Colonic mucosa (tissue), 4 donors: ENCODE measurements at regions of chr21 and their contacts with region 1.

Region 1: DNA sequence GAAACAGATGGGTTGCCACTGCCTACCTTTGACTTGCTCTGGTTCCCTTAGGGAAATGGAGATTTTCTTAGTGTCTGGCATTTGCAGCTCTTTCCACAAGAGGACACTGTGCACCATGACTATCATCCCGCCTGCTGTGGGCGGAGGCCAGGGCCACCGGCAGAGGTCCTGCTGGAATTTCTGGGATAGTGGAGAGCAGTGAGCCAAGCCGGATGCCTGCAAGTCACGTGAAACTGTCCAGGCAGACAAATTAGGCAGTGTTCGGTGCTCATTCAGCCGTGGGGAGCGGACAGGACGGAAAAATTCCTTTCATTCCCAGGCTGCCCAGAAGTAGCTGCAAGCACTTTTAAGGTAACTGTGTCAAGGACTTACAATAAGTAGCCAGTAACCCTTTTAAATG is 43.4 kb downstream of the IGSF5 start:
- DNase-seq: peak; percentile 75
- H3K4me3 ChIP-seq: no peak overlapping the region
- H3K27ac ChIP-seq: no peak overlapping the region
- H3K4me1 ChIP-seq: no peaks in the 10 kb centered on the region
- H3K27me3 ChIP-seq: no peaks in the 10 kb centered on the region
- CTCF ChIP-seq: peak; percentile 69

Region 2: DNA sequence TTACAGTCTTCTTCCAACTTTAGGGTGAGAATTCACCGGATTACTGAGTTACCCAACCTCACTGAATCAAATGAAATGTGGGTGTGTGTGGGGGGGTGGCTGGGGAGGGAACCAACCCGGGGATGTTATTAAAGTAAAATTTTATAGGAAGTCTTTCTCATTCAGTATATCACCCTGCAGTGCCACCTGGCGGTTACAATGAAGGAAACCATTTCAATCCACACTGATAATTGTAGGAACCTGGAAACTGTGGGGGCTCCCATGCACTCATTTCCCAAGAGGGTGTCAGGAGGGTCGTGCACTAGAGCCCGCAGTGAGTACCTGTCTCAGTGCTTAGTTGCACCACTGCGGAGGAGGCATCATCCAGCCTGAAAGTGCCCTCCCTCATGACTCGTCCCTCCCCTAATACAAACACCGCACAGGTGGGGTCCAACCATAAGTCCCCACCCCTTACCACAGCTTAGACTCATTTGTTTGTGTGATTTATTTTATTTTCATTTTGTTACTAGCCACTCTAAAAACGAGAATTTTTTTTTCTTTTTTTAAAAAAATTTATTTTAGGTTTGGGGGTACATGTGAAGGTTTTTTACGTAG is 72.5 kb before region 1 on chr21:
- intact Hi-C with region 1: no loop called
- DNase-seq: peak; percentile 74
- H3K4me3 ChIP-seq: no peak overlapping the region
- H3K27ac ChIP-seq: no peak overlapping the region
- H3K4me1 ChIP-seq: no peaks in the 10 kb centered on the region
- H3K27me3 ChIP-seq: no peaks in the 10 kb centered on the region
- CTCF ChIP-seq: peak; percentile 69

Region 3: GRCh38 chr21:40120940-40121575 is 332.7 kb after region 1 on chr21:
- intact Hi-C with region 1: loop called (anchors 5 kb)
- DNase-seq: no peak
- H3K4me3 ChIP-seq: no peak overlapping the region
- H3K27ac ChIP-seq: no peak overlapping the region
- H3K4me1 ChIP-seq: no peaks in the 10 kb centered on the region
- H3K27me3 ChIP-seq: no peaks in the 10 kb centered on the region
- CTCF ChIP-seq: peak; percentile 56